Activated B cell treated with CpG ODN at 0.5 μM for 24 hours (primary cell): ENCODE measurements at regions of chr16 and their contacts with region 1.

Region 1: GRCh38 chr16:70380861-70381603 is 34.3 kb downstream of the DDX19A start:
- DNase-seq: peak; percentile 83
- ATAC-seq: peak; percentile 90
- H3K4me3 Mint-ChIP-seq: peak overlapping the region; percentile 96
- H3K27ac Mint-ChIP-seq: peak overlapping the region; percentile 96
- H3K4me1 Mint-ChIP-seq: peaks cover 19% of the 10 kb centered on the region
- H3K27me3 Mint-ChIP-seq: no peaks in the 10 kb centered on the region
- CTCF ChIP-seq: no peak

Region 2: DNA sequence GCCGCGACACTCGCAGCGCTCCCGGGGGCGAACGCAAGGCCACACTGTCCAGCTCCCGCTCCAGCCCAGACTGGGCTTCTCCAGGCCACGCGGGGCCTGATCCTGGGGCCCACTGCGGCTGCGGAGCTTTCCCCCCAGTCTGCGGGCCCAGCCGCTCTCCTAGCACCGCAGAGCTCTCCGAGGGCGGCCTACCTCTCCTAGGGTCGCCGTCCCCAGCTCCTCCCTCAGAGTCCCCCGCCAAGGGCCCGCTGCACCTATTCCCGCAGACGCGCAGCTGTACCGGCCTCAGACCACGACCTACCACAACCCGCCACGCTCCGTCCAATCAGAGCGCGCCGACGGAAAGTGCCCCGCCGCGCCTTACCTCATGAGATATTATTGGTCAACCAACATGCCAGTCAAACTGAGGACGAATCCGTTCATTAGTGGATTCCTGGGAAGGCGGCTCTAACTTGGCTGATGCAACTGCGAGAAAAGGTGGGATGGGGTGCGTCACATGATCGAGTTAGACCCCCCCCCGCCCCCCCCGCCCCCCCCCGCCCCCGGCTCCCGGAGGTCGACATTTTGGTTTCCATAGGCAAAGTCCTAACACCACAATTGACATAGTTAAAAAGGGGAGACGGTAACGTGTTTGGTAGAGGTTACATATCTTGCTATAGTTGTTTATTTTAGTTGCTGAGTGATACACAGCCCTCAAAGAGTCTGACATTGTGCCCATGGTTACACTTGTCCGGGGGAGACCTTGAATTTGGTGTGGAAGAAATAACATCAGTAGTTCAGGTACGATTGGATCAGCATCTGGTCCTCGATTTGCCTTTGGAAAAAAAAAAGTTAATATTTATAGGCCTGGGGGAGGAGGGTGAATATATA is 91.6 kb before region 1 on chr16 and contains the start of gene AARS1:
- CTCF ChIA-PET with region 1: no interaction called
- POLR2A ChIA-PET with region 1: interaction called, 12 read pairs
- intact Hi-C with region 1: no loop called
- DNase-seq: peak; percentile 84
- ATAC-seq: peak; percentile 96
- H3K4me3 Mint-ChIP-seq: peak within 1 kb of the TSS; percentile 98
- H3K27ac Mint-ChIP-seq: peak within 1 kb of the TSS; percentile 96
- H3K4me1 Mint-ChIP-seq: peaks cover 16% of the 10 kb centered on the region
- H3K27me3 Mint-ChIP-seq: no peaks in the 10 kb centered on the region
- CTCF ChIP-seq: no peak
- total RNA-seq, gene AARS1: 152 and 154 TPM in 2 replicates

Region 3: DNA sequence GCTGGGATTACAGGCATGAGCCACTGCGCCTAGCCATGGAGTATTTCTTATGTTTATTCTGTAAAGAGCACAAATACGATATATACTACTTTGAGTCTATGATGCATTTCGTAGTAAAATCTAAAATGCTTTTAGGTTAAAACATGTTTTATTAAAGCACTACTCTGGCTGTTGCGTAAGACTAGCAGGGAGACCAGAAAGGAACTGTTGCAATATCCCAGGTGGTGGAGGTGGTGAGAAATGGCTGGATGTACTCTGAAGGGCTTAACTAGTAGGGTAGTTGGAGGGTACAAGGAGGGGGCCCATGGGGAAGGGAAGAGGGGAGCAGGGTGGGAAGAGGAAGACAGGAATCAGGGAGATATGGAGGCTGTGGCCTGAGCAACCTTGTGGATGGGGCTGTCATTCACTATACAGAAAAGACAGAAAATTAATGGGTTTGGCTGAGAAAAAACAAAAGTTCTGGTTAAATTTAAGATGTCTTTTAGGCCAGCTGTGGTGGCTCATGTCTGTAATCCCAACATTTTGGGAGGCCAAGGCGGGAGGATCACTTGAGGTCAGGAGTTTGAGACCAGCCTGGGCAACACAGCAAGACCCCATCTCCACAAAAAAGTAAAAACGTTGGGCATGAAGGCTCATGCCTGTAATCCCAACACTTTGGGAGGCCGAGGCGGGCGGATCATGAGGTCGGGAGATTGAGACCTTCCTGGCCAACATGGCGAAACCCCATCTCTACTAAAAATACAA is 22.1 kb after region 1 on chr16:
- CTCF ChIA-PET with region 1: interaction called, 3 read pairs
- POLR2A ChIA-PET with region 1: interaction called, 20 read pairs
- intact Hi-C with region 1: loop called (anchors 1 kb)
- DNase-seq: no peak
- ATAC-seq: no peak
- H3K4me3 Mint-ChIP-seq: no peak overlapping the region
- H3K27ac Mint-ChIP-seq: no peak overlapping the region
- H3K4me1 Mint-ChIP-seq: peaks cover 53% of the 10 kb centered on the region
- H3K27me3 Mint-ChIP-seq: peaks cover 6% of the 10 kb centered on the region
- CTCF ChIP-seq: no peak

Region 4: DNA sequence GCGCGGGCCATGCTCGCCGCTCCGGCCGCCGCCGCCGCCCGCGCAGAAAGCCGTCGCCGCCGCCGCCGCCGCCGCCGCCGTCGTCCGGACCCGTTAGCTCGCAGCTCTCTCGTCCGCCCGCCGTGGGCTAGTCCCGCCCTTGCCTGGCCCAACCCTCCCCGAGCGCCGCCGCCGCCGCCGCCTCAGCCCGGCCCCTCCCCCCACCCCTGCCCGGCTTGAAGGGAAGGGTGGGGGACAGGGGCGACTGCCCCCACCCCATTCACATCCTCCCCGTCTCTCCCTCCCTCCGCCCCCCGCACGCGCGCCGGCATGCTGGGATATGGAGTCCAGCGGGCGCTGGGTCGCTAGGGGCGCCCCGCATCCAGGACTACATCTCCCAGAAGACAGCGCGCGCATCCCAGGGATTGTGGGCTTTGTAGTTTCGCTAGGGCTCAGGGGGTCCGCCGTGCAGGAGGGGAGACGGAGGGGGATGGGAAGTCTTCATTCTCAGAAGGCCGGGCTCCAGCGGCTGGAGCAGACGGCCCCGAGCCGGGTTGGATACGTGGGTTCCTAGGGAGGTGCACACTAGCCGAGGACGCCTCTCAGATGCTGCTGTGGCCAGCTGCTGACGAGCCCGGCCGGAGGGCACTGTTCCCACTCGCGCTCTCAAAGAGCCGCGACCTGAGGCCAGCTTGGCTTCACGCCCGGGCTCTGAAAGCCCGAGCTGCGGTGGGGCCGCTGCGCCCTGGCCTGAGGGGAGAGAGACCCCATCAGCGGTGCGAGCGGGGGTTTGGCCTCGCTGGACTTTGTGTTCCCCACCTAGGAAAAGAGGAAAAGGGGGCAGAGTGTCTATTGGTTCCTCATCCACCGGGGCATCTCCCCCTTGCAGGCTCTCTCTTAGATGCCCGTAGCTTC is 58.2 kb after region 1 on chr16 and contains the start of gene ST3GAL2:
- CTCF ChIA-PET with region 1: interaction called, 5 read pairs
- POLR2A ChIA-PET with region 1: interaction called, 35 read pairs
- intact Hi-C with region 1: loop called (anchors 1 kb)
- DNase-seq: peak; percentile 90
- ATAC-seq: peak; percentile 96
- H3K4me3 Mint-ChIP-seq: peak within 1 kb of the TSS; percentile 96
- H3K27ac Mint-ChIP-seq: peak within 1 kb of the TSS; percentile 86
- H3K4me1 Mint-ChIP-seq: peaks cover 39% of the 10 kb centered on the region
- H3K27me3 Mint-ChIP-seq: no peaks in the 10 kb centered on the region
- CTCF ChIP-seq: no peak
- total RNA-seq, gene ST3GAL2: 51.5 and 57.4 TPM in 2 replicates

Region 5: GRCh38 chr16:70478912-70479341 is 97.9 kb after region 1 on chr16:
- CTCF ChIA-PET with region 1: interaction called, 6 read pairs
- POLR2A ChIA-PET with region 1: interaction called, 12 read pairs
- intact Hi-C with region 1: loop called (anchors 5 kb)
- DNase-seq: no peak
- ATAC-seq: no peak
- H3K4me3 Mint-ChIP-seq: no peak overlapping the region
- H3K27ac Mint-ChIP-seq: no peak overlapping the region
- H3K4me1 Mint-ChIP-seq: peaks cover 5% of the 10 kb centered on the region
- H3K27me3 Mint-ChIP-seq: no peaks in the 10 kb centered on the region
- CTCF ChIP-seq: no peak